ENCODE measurements at regions of chr14 and their contacts with region 1.

Region 1: DNA sequence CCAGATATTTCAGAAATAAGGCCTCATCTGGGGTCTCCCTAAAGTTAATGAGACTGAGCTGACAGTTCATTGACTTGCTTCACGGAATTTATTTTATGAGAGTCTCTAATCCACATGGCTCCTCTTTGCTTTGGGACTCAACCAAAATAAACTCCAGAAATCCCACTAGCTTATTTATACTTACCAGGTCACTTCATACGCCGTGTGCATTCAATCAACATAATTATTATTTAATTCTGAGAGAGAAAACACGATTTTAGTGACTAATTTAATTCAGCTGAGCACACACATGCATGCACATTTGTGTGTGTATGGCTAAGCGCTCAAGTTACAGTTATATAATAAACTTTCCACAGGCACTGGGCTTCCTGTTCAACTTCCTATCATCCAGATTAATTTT is 333.4 kb upstream of the CCDC196 start:
- DNase-seq: no peak

Region 2: DNA sequence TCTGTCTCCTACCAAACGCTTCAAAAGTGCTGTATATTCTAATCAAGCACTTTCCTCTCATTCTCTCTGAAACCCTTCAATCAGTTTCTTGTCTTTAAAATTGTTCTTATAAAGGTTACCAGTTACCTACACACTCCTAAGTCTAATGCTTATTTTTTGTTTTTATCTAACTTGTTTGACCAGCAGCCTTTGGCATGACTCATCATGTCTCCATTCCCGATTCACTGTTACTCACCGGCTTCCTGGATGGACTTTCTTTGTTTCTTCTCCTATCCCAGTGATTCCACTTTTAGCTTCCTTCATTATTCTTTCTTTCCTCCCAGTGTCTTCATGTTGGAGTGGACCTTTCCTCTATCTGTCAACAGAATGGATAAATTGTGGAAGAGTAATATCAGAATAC is 35.2 kb before region 1 on chr14:
- intact Hi-C with region 1: no loop called
- DNase-seq: no peak

Region 3: GRCh38 chr14:66174453-66174891 is 21.7 kb after region 1 on chr14:
- intact Hi-C with region 1: no loop called
- DNase-seq: no peak

Region 4: GRCh38 chr14:67137744-67138371 is 985.1 kb after region 1 on chr14:
- intact Hi-C with region 1: loop called in 1 of 2 experiments (anchors 5 kb)
- DNase-seq: no peak

Measured in posterior vena cava (tissue), 2 donors.